Calu3 (cell line): ENCODE measurements at regions of chr17 and their contacts with region 1.

Region 1: GRCh38 chr17:39980351-39981206 is at the start of gene PSMD3:
- DNase-seq: peak; percentile 100
- H3K4me3 Mint-ChIP-seq: peak within 1 kb of the TSS; percentile 77
- H3K27ac Mint-ChIP-seq: peak within 1 kb of the TSS; percentile 81
- H3K4me1 Mint-ChIP-seq: peaks cover 26% of the 10 kb centered on the region
- H3K27me3 Mint-ChIP-seq: peaks cover 43% of the 10 kb centered on the region
- CTCF ChIP-seq: no peak
- total RNA-seq, gene PSMD3: 2,152 and 2,179 TPM in 2 replicates

Region 2: GRCh38 chr17:39730095-39730921 is 250.3 kb before region 1 on chr17 and contains the start of gene MIEN1:
- CTCF ChIA-PET with region 1: interaction called, 1,335 read pairs
- intact Hi-C with region 1: loop called (anchors 1 kb)
- DNase-seq: no peak
- H3K4me3 Mint-ChIP-seq: peak within 1 kb of the TSS; percentile 79
- H3K27ac Mint-ChIP-seq: peak within 1 kb of the TSS; percentile 90
- H3K4me1 Mint-ChIP-seq: peaks cover 34% of the 10 kb centered on the region
- H3K27me3 Mint-ChIP-seq: no peaks in the 10 kb centered on the region
- CTCF ChIP-seq: no peak
- total RNA-seq, gene MIEN1: 2,121 and 2,217 TPM in 2 replicates

Region 3: DNA sequence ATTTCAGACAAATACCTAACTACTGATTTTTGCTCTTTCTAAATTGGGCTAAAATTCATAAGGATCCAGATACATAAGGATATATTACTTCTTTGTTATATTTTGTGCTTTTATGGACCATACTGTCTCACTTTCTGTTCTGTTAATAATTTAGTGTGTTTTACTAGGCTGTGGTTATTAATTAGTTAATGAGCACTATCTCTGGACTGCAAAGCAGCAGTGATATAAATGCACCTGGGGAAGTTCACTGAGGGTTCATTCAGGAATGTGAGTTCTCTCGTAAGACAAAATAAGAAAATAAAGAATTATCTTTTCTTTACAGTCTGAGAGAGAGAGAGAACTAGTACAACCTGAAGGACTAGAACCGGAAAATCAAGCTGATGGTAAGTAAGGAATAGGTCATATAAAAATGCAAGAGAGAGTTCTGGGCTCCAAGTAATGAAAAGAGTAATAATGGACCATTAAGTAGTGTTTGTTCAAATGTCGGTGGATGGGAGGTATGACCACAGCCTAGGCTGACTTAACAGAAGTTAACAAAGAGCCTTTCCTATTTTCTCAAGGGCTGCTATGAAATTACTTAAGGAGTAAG is 172.1 kb before region 1 on chr17:
- CTCF ChIA-PET with region 1: interaction called, 64 read pairs
- intact Hi-C with region 1: loop called (anchors 1 kb)
- DNase-seq: peak; percentile 98
- H3K4me3 Mint-ChIP-seq: peak overlapping the region; percentile 1
- H3K27ac Mint-ChIP-seq: peak overlapping the region; percentile 16
- H3K4me1 Mint-ChIP-seq: peaks cover 37% of the 10 kb centered on the region
- H3K27me3 Mint-ChIP-seq: no peaks in the 10 kb centered on the region
- CTCF ChIP-seq: no peak

Region 4: DNA sequence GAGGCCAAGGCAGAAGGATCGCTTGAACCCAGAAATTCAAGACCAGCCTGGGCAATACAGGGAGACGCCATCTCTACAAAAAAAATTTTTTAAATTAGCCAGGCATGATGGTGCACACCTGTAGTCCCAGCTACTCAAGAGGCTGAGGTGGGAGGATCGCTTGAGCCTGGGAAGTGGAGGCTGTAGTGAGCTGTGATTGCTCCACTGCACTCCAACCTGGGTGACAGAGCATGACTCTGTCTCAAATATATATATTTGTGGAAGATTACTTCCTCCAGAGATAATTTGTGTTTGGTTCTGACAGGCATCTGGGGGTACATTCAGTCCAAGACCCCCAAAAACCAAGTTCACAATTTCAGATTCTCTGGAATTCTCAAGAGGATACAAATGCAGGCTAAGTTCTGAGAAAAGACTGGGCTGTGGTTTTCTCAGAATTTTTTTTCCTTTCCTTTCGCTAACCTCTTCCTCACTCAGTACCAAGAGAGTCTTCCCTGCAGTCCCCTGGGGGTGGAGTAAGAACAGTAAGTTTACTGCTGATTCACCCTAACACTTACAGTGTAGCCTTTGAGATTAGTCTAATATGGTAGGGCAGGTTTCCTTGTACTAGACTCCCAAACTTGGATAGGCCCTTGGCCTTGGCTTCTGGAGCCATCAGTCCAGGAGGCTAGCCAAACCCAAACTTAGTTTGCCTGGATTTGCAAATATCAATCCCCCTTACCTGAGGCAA is 77.3 kb before region 1 on chr17:
- CTCF ChIA-PET with region 1: interaction called, 6,506 read pairs
- intact Hi-C with region 1: loop called (anchors 2 kb)
- DNase-seq: peak; percentile 66
- H3K4me3 Mint-ChIP-seq: no peak overlapping the region
- H3K27ac Mint-ChIP-seq: no peak overlapping the region
- H3K4me1 Mint-ChIP-seq: peaks cover 12% of the 10 kb centered on the region
- H3K27me3 Mint-ChIP-seq: no peaks in the 10 kb centered on the region
- CTCF ChIP-seq: no peak

Region 5: GRCh38 chr17:40038882-40039513 is 58.4 kb after region 1 on chr17:
- CTCF ChIA-PET with region 1: interaction called, 10 read pairs
- intact Hi-C with region 1: loop called (anchors 5 kb)
- DNase-seq: peak; percentile 92
- H3K4me3 Mint-ChIP-seq: no peak overlapping the region
- H3K27ac Mint-ChIP-seq: no peak overlapping the region
- H3K4me1 Mint-ChIP-seq: peaks cover 8% of the 10 kb centered on the region
- H3K27me3 Mint-ChIP-seq: no peaks in the 10 kb centered on the region
- CTCF ChIP-seq: no peak

Region 6: DNA sequence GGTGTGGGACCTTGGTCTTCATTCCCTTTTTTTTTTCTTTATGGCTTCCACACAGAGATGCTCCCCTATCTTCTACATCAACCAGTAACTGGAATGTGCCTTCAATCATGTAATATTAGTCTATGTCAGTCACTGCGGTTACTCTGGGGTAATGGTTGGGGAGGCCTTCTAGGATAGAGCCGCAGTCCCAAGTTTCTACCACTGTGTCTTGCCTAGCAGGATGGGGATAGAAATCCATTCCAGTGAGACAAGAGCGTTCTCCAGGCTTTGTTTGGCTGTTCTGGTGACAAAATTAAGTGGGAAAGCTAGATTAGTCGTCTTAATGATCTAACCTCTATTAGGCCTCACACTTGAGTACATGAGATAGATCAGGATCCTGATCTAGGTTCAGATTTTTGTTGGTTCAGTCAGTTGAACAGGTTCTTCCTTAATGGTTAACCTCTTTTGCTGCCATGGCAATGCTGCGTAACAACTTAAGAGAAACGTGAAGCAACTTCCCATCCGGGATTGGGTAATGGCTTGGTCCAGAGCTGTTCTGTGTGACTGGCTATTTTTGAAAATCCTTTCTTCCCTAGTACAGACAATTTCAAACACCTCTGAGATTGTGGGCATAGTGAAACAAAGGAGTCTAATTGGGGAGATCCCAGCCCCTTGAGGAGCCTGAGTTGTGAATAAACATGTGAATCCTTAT is 149.9 kb after region 1 on chr17:
- CTCF ChIA-PET with region 1: no interaction called
- intact Hi-C with region 1: no loop called
- DNase-seq: no peak
- H3K4me3 Mint-ChIP-seq: no peak overlapping the region
- H3K27ac Mint-ChIP-seq: peak overlapping the region; percentile 1
- H3K4me1 Mint-ChIP-seq: peaks cover 38% of the 10 kb centered on the region
- H3K27me3 Mint-ChIP-seq: no peaks in the 10 kb centered on the region
- CTCF ChIP-seq: no peak

Region 7: GRCh38 chr17:40422990-40423616 is 442.5 kb after region 1 on chr17:
- CTCF ChIA-PET with region 1: interaction called, 118 read pairs
- intact Hi-C with region 1: loop called (anchors 1 kb)
- DNase-seq: peak; percentile 73
- H3K4me3 Mint-ChIP-seq: no peak overlapping the region
- H3K27ac Mint-ChIP-seq: no peak overlapping the region
- H3K4me1 Mint-ChIP-seq: peaks cover 20% of the 10 kb centered on the region
- H3K27me3 Mint-ChIP-seq: peaks cover 24% of the 10 kb centered on the region
- CTCF ChIP-seq: no peak